ENCODE measurements at regions of chr9 and their contacts with region 1.

Region 1: DNA sequence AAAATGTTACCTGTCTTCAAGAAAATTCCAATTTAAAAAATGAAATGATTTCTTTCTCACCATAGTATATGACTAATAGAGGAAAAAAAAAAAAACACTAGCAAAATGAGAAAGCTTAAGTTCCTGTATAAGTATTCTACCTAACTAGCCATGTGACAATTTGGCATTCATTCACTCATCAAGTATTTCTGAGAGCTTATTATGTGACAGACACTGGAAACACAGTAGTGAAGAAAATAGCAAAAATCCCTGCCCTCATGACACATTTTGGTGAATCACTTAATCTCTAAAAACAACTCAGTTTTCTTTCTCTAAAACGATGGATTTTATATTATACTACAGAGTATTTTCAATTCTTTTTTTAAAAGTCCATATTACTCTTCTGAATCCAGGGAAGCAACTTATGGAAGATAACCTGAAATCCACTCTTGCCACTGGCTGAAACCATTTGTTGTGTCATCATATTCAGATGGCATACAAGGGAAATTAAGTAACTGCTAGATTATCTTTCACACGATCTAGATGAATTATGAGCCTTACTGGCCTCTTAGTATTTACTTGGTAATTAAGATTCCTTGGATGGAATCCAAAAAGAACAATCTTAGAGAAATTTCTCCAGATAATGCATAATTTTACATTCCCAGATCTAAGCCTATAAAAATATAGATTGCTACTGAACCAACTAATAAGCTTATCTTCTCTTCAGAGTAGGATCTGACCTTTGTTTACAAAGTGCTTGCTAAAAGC is 5.5 kb downstream of the PTBP3 start:
- DNase-seq: peak in 3 of 14 experiments; percentile 32 to 40 (median 32)
- ATAC-seq: no peak
- H3K4me3 ChIP-seq: no peak overlapping the region
- H3K4me3 Mint-ChIP-seq: peak overlapping the region; percentile 43
- H3K27ac ChIP-seq: no peak overlapping the region
- H3K27ac Mint-ChIP-seq: peak overlapping the region; percentile 31
- H3K4me1 ChIP-seq: peaks cover 30% of the 10 kb centered on the region
- H3K4me1 Mint-ChIP-seq: peaks cover 81% of the 10 kb centered on the region
- H3K27me3 ChIP-seq: no peaks in the 10 kb centered on the region
- H3K27me3 Mint-ChIP-seq: no peaks in the 10 kb centered on the region
- CTCF ChIP-seq: no peak

Region 2: GRCh38 chr9:112140936-112141335 is 187.0 kb before region 1 on chr9:
- CTCF ChIA-PET with region 1: no interaction called
- POLR2A ChIA-PET with region 1: no interaction called
- intact Hi-C with region 1: no loop called
- DNase-seq: no peak
- ATAC-seq: no peak
- H3K4me3 ChIP-seq: no peak overlapping the region
- H3K4me3 Mint-ChIP-seq: no peak overlapping the region
- H3K27ac ChIP-seq: no peak overlapping the region
- H3K27ac Mint-ChIP-seq: no peak overlapping the region
- H3K4me1 ChIP-seq: no peaks in the 10 kb centered on the region
- H3K4me1 Mint-ChIP-seq: no peaks in the 10 kb centered on the region
- H3K27me3 ChIP-seq: no peaks in the 10 kb centered on the region
- H3K27me3 Mint-ChIP-seq: no peaks in the 10 kb centered on the region
- CTCF ChIP-seq: no peak

Region 3: GRCh38 chr9:112252194-112252593 is 75.7 kb before region 1 on chr9:
- CTCF ChIA-PET with region 1: no interaction called
- POLR2A ChIA-PET with region 1: no interaction called
- intact Hi-C with region 1: loop called in 1 of 2 experiments (anchors 5 kb)
- DNase-seq: no peak
- ATAC-seq: no peak
- H3K4me3 ChIP-seq: no peak overlapping the region
- H3K4me3 Mint-ChIP-seq: no peak overlapping the region
- H3K27ac ChIP-seq: no peak overlapping the region
- H3K27ac Mint-ChIP-seq: peak overlapping the region; percentile 28
- H3K4me1 ChIP-seq: no peaks in the 10 kb centered on the region
- H3K4me1 Mint-ChIP-seq: peaks cover 48% of the 10 kb centered on the region
- H3K27me3 ChIP-seq: no peaks in the 10 kb centered on the region
- H3K27me3 Mint-ChIP-seq: no peaks in the 10 kb centered on the region
- CTCF ChIP-seq: no peak

Region 4: DNA sequence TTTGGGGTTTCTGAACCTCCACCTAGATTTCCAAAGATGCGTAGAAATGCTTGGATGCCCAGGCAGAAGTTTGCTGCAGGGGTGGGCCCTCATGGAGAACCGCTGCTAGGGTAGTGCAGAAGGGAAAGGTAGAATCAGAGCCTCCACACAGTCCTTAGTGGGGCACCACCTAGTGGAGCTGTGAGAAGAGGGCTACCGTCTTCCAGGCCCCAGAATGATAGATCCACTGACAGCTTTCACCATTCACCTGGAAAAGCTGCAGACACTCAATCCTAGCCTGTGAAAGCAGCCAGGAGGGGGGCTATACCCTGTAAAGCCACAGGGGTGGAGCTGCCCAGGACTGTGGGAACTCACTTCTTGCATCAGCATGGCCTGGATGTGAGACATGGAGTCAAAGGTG is 38.7 kb after region 1 on chr9:
- CTCF ChIA-PET with region 1: no interaction called
- POLR2A ChIA-PET with region 1: no interaction called
- intact Hi-C with region 1: no loop called
- DNase-seq: no peak
- ATAC-seq: no peak
- H3K4me3 ChIP-seq: no peak overlapping the region
- H3K4me3 Mint-ChIP-seq: no peak overlapping the region
- H3K27ac ChIP-seq: no peak overlapping the region
- H3K27ac Mint-ChIP-seq: no peak overlapping the region
- H3K4me1 ChIP-seq: no peaks in the 10 kb centered on the region
- H3K4me1 Mint-ChIP-seq: peaks cover 3% of the 10 kb centered on the region
- H3K27me3 ChIP-seq: no peaks in the 10 kb centered on the region
- H3K27me3 Mint-ChIP-seq: no peaks in the 10 kb centered on the region
- CTCF ChIP-seq: no peak

Region 5: DNA sequence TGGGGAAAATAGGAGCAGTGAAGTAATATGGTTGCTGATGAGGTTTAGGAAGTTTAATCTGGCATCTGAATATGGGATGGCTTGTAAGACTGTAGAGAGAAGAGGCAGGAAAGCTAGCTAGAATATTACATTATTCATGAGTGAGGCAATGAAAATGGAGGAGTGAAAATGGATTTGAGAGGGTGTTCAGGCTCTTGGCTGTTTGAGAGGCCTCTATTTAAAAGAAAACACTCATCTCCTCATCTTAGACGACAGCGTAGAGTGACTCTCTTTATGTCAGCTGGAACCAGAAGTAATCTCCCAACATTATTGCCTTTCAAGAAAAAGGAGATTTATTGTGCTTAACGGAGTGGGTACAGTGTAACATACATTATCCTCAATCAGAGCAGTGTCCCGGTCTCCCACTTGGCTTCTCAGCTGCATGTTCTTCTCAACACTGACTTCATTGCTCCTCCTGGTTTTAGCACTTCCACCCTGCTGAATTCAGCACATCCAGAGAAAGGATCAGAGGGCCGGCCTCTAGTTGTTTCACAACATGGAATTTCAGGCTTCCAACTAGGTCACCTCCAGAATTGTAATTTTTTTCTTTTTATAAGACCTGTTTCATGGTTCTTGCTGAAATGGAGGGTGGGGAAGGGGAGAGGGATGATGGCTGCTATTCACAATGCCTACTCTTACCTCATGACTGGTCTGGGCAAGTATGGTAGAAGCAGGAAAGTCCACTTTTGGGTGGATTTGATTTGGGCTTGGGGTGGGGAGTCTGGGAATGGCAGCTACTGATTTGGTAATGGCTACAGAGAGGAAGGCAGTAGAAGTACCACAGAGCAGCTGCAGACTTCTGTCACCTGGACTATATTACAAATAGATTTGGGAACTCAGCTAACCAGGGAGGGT is 105.9 kb after region 1 on chr9:
- CTCF ChIA-PET with region 1: no interaction called
- POLR2A ChIA-PET with region 1: no interaction called
- intact Hi-C with region 1: no loop called
- DNase-seq: no peak
- ATAC-seq: no peak
- H3K4me3 ChIP-seq: no peak overlapping the region
- H3K4me3 Mint-ChIP-seq: no peak overlapping the region
- H3K27ac ChIP-seq: no peak overlapping the region
- H3K27ac Mint-ChIP-seq: no peak overlapping the region
- H3K4me1 ChIP-seq: no peaks in the 10 kb centered on the region
- H3K4me1 Mint-ChIP-seq: no peaks in the 10 kb centered on the region
- H3K27me3 ChIP-seq: no peaks in the 10 kb centered on the region
- H3K27me3 Mint-ChIP-seq: no peaks in the 10 kb centered on the region
- CTCF ChIP-seq: no peak